IMR-90 (cell line): ENCODE measurements at regions of chr4 and their contacts with region 1.

Region 1: DNA sequence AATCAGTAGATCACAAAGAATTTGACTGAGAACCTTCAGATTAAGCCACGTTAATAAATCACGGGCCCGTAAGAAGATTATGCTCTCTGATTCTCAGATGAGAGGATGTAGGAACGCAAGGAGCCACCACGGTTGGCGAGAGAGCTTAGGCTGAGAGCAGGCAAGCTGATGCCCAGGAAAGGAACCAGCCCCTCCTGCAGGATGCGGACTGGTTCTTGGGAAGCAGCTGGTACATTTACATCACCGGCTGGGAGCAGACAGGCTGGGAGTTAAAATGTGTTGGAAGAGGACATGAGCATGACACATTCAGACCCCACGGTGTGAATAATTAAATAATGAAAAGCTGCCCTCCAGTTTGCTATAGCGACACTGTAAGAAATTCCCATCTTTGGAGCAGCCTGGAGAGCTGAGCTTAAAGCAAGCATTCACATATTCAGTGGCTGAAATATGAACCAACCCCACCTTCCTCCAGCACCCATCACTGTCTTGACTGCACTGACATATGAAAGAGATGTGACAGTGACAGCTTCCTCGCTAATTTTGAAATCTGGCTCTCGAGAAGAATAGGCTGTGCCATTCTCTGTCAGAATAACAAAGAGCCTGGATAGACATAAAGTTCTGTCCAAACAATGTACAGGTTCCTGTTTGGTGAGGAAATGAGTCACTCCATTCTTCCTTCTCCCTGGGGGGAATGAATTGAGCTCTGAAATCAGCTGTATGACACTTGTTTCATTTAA is 33.1 kb downstream of the LNX1 start:
- DNase-seq: peak; percentile 41
- ATAC-seq: peak; percentile 48
- H3K4me3 ChIP-seq: no peak overlapping the region
- H3K27ac ChIP-seq: no peak overlapping the region
- H3K4me1 ChIP-seq: peaks cover 13% of the 10 kb centered on the region
- H3K27me3 ChIP-seq: no peaks in the 10 kb centered on the region
- CTCF ChIP-seq: no peak
- POLR2A ChIP-seq: no peak
- RAD21 ChIP-seq: no peak

Region 2: DNA sequence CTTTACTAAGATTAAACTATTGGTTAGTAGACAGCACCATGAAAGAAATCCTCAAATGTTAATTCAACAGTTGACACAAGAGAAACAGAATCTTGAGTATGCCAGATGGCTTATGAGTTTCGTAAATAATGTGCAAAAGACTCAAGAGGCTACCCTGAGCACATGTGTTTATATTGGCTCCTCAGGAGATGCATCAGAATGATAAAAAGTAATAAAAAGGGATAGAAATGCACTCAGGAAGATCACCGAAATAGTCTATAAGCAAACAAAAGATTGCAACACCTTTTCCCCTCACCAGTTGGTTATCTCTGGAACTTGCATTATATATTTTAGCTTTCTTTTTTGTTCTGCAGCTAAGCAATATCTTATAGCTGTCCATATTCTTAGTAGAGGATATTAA is 276.8 kb before region 1 on chr4:
- CTCF ChIA-PET with region 1: no interaction called
- POLR2A ChIA-PET with region 1: no interaction called
- dilution Hi-C with region 1: no loop called
- in situ Hi-C with region 1: no loop called
- intact Hi-C with region 1: no loop called
- DNase-seq: peak; percentile 67
- ATAC-seq: peak; percentile 60
- H3K4me3 ChIP-seq: no peak overlapping the region
- H3K27ac ChIP-seq: no peak overlapping the region
- H3K4me1 ChIP-seq: peaks cover 12% of the 10 kb centered on the region; the same call in 1 of the 2 replicates
- H3K27me3 ChIP-seq: no peaks in the 10 kb centered on the region
- CTCF ChIP-seq: no peak
- POLR2A ChIP-seq: no peak
- RAD21 ChIP-seq: no peak

Region 3: DNA sequence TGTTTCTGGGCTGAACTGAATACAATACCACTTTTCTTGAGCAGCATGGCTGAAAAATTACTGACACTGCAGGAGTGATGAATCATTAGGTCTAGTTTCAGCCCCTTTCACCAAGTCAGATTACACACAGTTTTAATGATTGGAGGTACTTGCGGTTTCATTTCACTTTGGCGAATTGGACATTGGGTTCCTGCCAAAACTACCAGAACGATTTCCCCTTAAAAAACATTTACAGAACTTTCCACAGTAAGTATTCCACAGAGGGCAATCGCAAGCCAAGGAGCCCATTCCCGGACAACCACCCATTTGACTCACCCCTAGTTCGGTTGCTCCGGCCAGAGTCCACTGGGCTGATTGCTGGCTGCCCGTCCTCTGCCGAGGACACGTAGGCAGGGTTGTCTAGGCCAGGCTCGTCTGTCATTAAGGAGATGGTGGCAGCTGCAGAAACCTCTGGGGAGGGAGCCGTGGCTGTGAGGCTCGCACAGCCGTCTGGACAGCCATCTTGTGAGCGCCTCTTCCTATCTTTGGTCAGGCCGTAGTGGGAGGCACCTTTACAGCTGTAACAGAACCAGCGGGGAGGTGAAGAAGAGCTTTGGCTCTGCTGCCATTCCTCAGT is 50.5 kb before region 1 on chr4:
- CTCF ChIA-PET with region 1: no interaction called
- POLR2A ChIA-PET with region 1: no interaction called
- dilution Hi-C with region 1: no loop called
- in situ Hi-C with region 1: no loop called
- intact Hi-C with region 1: loop called (anchors 5 kb)
- DNase-seq: peak; percentile 48
- ATAC-seq: no peak
- H3K4me3 ChIP-seq: no peak overlapping the region
- H3K27ac ChIP-seq: no peak overlapping the region
- H3K4me1 ChIP-seq: peaks cover 6% of the 10 kb centered on the region
- H3K27me3 ChIP-seq: no peaks in the 10 kb centered on the region
- CTCF ChIP-seq: no peak
- POLR2A ChIP-seq: no peak
- RAD21 ChIP-seq: no peak

Region 4: DNA sequence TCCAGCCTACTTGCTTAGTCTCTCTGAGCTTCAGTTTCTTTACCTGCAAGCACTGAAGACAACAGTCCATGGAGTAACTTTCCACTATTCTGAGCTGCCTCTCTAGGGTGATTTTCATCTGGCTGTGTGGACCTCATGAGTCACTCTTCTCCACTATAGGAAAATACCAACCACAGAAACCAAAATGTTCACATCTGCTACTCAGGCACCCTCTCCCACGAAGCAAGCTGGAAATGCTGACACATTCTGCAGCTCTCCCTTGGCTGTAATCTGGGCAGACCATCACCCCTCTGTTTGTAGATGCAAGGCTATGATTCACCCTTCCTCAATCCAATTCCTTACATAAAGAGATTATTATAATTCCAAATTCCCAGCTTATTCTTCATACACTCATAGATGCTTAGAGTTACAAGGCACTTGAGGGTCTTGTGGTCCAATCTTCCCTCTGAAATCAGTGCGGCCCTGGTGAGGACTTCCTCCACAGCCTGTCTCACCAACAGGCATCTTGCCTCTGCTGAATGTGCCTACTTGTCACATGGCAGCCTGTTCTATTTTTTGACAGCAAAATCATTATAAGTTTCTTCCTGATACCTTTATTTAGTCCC is 130.1 kb after region 1 on chr4:
- CTCF ChIA-PET with region 1: no interaction called
- POLR2A ChIA-PET with region 1: no interaction called
- dilution Hi-C with region 1: no loop called
- in situ Hi-C with region 1: no loop called
- intact Hi-C with region 1: no loop called
- DNase-seq: peak; percentile 100
- ATAC-seq: peak; percentile 95
- H3K4me3 ChIP-seq: no peak overlapping the region
- H3K27ac ChIP-seq: peak overlapping the region; percentile 89
- H3K4me1 ChIP-seq: peaks cover 12% of the 10 kb centered on the region
- H3K27me3 ChIP-seq: no peaks in the 10 kb centered on the region
- CTCF ChIP-seq: no peak
- POLR2A ChIP-seq: no peak
- RAD21 ChIP-seq: peak; percentile 22